BJ (cell line): ENCODE measurements at regions of chr6 and their contacts with region 1.

Region 1: GRCh38 chr6:75208298-75209183 is 2.7 kb upstream of the COL12A1 start:
- DNase-seq: no peak
- H3K4me3 ChIP-seq: no peak overlapping the region
- H3K27me3 ChIP-seq: no peaks in the 10 kb centered on the region
- CTCF ChIP-seq: peak; percentile 87

Region 2: GRCh38 chr6:73732845-73733675 is 1475.5 kb before region 1 on chr6:
- CTCF ChIA-PET with region 1: interaction called, 89 read pairs
- POLR2A ChIA-PET with region 1: no interaction called
- DNase-seq: no peak
- H3K4me3 ChIP-seq: no peak overlapping the region
- H3K27me3 ChIP-seq: no peaks in the 10 kb centered on the region
- CTCF ChIP-seq: peak; percentile 93

Region 3: GRCh38 chr6:73854998-73855718 is 1353.4 kb before region 1 on chr6:
- CTCF ChIA-PET with region 1: interaction called, 24 read pairs
- POLR2A ChIA-PET with region 1: no interaction called
- DNase-seq: no peak
- H3K4me3 ChIP-seq: no peak overlapping the region
- H3K27me3 ChIP-seq: no peaks in the 10 kb centered on the region
- CTCF ChIP-seq: peak; percentile 61

Region 4: GRCh38 chr6:73985891-73986290 is 1222.7 kb before region 1 on chr6:
- CTCF ChIA-PET with region 1: interaction called, 20 read pairs
- POLR2A ChIA-PET with region 1: no interaction called
- DNase-seq: peak; percentile 89
- H3K4me3 ChIP-seq: no peak overlapping the region
- H3K27me3 ChIP-seq: no peaks in the 10 kb centered on the region
- CTCF ChIP-seq: peak; percentile 45

Region 5: DNA sequence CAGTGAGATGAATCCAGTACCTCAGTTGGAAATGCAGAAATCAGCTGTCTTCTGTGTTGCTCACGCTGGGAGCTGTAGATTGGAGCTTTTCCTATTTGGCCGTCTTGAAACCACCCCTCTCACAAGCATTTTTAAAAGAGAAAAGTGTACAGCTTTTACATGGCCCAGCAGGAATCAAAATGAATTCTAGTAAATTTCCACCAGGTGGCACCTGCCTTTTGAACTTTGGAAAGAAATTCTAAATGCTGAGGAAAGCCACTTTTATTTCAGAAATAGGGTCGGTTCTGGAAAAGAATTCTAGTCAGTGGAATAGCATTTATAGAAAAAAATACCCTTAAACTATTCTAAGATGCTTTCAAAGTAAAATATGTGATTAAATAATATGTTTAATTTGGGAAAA is 864.7 kb before region 1 on chr6:
- CTCF ChIA-PET with region 1: interaction called, 10 read pairs
- POLR2A ChIA-PET with region 1: no interaction called
- DNase-seq: no peak
- H3K4me3 ChIP-seq: no peak overlapping the region
- H3K27me3 ChIP-seq: no peaks in the 10 kb centered on the region
- CTCF ChIP-seq: peak; percentile 39

Region 6: GRCh38 chr6:75220357-75220756 is 11.8 kb after region 1 on chr6:
- CTCF ChIA-PET with region 1: interaction called, 34 read pairs
- POLR2A ChIA-PET with region 1: no interaction called
- DNase-seq: no peak
- H3K4me3 ChIP-seq: no peak overlapping the region
- H3K27me3 ChIP-seq: no peaks in the 10 kb centered on the region
- CTCF ChIP-seq: no peak

Region 7: GRCh38 chr6:75243333-75244062 is 35.0 kb after region 1 on chr6 and contains the start of gene COX7A2:
- CTCF ChIA-PET with region 1: interaction called, 11 read pairs
- POLR2A ChIA-PET with region 1: interaction called, 3 read pairs
- DNase-seq: peak; percentile 96
- H3K4me3 ChIP-seq: peak within 1 kb of the TSS; percentile 68
- H3K27me3 ChIP-seq: no peaks in the 10 kb centered on the region
- CTCF ChIP-seq: no peak
- polyA plus RNA-seq, gene COX7A2: 133 and 214 TPM in 2 replicates